Gastrocnemius medialis (tissue), 4 donors: ENCODE measurements at regions of chr11 and their contacts with region 1.

Region 1: GRCh38 chr11:108713076-108713790 is 48.4 kb downstream of the DDX10 start:
- DNase-seq: no peak
- ATAC-seq: no peak
- H3K4me3 ChIP-seq: no peak overlapping the region
- H3K27ac ChIP-seq: no peak overlapping the region
- H3K4me1 ChIP-seq: no peaks in the 10 kb centered on the region
- H3K27me3 ChIP-seq: no peaks in the 10 kb centered on the region
- CTCF ChIP-seq: no peak
- POLR2A ChIP-seq: no peak

Region 2: GRCh38 chr11:109697140-109697843 is 984.1 kb after region 1 on chr11:
- in situ Hi-C with region 1: loop called in 1 of 4 experiments (anchors 25 kb)
- intact Hi-C with region 1: no loop called
- DNase-seq: no peak
- ATAC-seq: no peak
- H3K4me3 ChIP-seq: no peak overlapping the region
- H3K27ac ChIP-seq: no peak overlapping the region
- H3K4me1 ChIP-seq: no peaks in the 10 kb centered on the region
- H3K27me3 ChIP-seq: no peaks in the 10 kb centered on the region
- CTCF ChIP-seq: peak in 2 of 5 experiments; percentile 33 to 37
- POLR2A ChIP-seq: no peak